ENCODE measurements at regions of chr2 and their contacts with region 1.

Region 1: DNA sequence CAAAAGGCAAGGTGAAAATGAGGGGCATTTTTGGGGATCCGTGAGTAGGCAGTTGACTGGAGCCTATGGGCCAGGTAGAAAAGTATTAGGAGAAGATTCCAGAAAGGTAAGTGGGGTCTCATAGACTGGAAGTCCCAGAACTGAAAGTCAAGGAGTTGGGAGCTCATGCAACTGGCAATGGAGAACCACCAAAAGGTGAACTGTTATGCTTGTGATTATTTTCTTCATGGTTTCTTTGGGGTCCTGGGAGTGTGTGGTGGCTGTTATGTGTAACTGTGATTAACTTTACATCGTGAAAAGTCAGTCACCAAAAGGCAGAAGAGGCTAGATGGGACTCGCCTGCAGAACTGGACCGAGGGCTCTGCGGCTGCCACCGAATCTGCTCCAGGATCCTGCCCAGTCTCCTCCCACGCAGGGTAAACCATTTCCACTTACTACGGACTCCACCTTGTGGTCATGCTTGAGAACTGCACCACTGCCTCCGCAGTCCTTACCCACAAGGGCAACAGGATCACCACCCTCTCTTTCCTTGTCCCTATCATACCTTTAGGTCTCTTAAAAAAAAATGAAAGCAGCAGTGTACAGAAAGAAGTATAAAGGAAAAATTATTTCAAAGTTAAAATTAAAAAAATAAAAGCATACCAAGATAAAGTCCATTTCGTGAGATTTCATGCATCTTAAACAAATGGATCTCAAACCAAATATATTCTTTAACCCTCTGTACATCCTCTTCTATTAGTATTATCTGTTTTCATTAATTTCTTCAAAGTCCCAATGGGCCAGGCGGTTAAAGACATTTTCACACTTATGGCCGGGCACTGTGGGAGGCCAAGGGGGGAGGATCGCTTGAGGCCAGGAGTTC is 15.6 kb upstream of the CEP68 start:
- DNase-seq: peak; percentile 93
- H3K4me3 ChIP-seq: peak overlapping the region; percentile 62
- H3K27ac ChIP-seq: no peak overlapping the region
- H3K4me1 ChIP-seq: no peaks in the 10 kb centered on the region
- H3K27me3 ChIP-seq: no peaks in the 10 kb centered on the region

Region 2: DNA sequence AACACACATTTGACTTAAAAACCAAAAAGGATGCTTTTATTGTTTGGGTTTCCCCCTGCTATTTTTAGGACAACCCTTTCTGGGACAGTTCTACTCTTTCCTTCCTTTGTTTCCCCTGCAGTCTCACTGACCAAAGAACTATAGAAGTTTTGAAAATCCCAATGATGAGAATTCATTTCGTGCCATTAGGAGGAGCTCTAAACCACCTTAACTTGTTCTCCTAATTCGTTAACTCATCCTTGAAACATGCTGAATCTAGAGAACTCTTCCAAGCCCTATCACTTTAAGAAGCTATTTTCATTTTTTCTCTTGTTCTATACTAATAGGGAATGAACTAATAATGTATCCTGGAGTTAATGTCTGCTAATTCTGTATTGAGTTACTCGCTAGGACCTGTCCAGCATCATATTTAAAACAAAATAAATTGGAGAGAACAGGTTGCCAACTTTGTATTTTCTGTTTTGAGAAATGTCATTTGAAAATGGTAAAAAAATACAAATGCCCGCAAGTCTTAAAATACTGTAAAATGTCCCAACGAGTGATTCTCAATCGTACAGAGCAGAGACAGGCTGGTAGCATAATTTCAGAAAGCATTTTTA is 453.6 kb before region 1 on chr2:
- in situ Hi-C with region 1: loop called (anchors 25 kb)
- DNase-seq: peak; percentile 80
- H3K4me3 ChIP-seq: no peak overlapping the region
- H3K27ac ChIP-seq: no peak overlapping the region
- H3K4me1 ChIP-seq: peaks cover 7% of the 10 kb centered on the region
- H3K27me3 ChIP-seq: no peaks in the 10 kb centered on the region